Activated B cell treated with CpG ODN at 0.5 μM for 24 hours (primary cell): ENCODE measurements at regions of chr1 and their contacts with region 1.

Region 1: GRCh38 chr1:56709269-56709880 is 64.3 kb downstream of the PRKAA2 start:
- DNase-seq: no peak
- ATAC-seq: no peak
- H3K4me3 Mint-ChIP-seq: no peak overlapping the region
- H3K27ac Mint-ChIP-seq: no peak overlapping the region
- H3K4me1 Mint-ChIP-seq: no peaks in the 10 kb centered on the region
- H3K27me3 Mint-ChIP-seq: peaks cover 25% of the 10 kb centered on the region
- CTCF ChIP-seq: no peak

Region 2: GRCh38 chr1:55337801-55338447 is 1371.5 kb before region 1 on chr1:
- CTCF ChIA-PET with region 1: no interaction called
- POLR2A ChIA-PET with region 1: no interaction called
- intact Hi-C with region 1: loop called (anchors 2 kb)
- DNase-seq: no peak
- ATAC-seq: peak; percentile 66
- H3K4me3 Mint-ChIP-seq: no peak overlapping the region
- H3K27ac Mint-ChIP-seq: peak overlapping the region; percentile 12
- H3K4me1 Mint-ChIP-seq: peaks cover 9% of the 10 kb centered on the region
- H3K27me3 Mint-ChIP-seq: peaks cover 6% of the 10 kb centered on the region
- CTCF ChIP-seq: no peak

Region 3: GRCh38 chr1:55375617-55376258 is 1333.6 kb before region 1 on chr1:
- CTCF ChIA-PET with region 1: interaction called, 5 read pairs
- POLR2A ChIA-PET with region 1: no interaction called
- intact Hi-C with region 1: loop called (anchors 1 kb)
- DNase-seq: no peak
- ATAC-seq: peak; percentile 49
- H3K4me3 Mint-ChIP-seq: no peak overlapping the region
- H3K27ac Mint-ChIP-seq: no peak overlapping the region
- H3K4me1 Mint-ChIP-seq: no peaks in the 10 kb centered on the region
- H3K27me3 Mint-ChIP-seq: peaks cover 1% of the 10 kb centered on the region
- CTCF ChIP-seq: peak; percentile 33

Region 4: DNA sequence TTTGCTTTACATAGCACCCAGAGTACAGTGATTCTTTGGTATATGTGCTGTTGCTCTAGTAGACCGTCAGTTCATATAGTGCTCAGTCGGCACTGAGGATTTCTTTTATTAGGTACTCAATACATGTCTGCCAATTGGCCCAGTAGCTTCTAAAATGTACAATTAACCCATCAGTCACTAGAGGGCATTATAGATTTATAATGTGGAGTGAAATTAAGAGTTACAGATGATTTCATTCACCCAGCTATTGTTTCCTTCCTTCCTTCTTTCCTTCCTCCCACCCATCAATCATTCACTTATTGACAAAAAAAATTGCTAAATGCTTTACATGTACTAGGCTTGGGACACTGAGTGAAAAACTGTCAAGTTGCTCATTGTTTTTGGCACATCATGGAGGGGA is 1230.6 kb before region 1 on chr1:
- CTCF ChIA-PET with region 1: interaction called, 16 read pairs
- POLR2A ChIA-PET with region 1: no interaction called
- intact Hi-C with region 1: loop called (anchors 2 kb)
- DNase-seq: no peak
- ATAC-seq: no peak
- H3K4me3 Mint-ChIP-seq: no peak overlapping the region
- H3K27ac Mint-ChIP-seq: no peak overlapping the region
- H3K4me1 Mint-ChIP-seq: no peaks in the 10 kb centered on the region
- H3K27me3 Mint-ChIP-seq: peaks cover 24% of the 10 kb centered on the region
- CTCF ChIP-seq: no peak

Region 5: GRCh38 chr1:56696663-56697062 is 12.7 kb before region 1 on chr1:
- CTCF ChIA-PET with region 1: interaction called, 13 read pairs
- POLR2A ChIA-PET with region 1: no interaction called
- intact Hi-C with region 1: no loop called
- DNase-seq: no peak
- ATAC-seq: no peak
- H3K4me3 Mint-ChIP-seq: no peak overlapping the region
- H3K27ac Mint-ChIP-seq: no peak overlapping the region
- H3K4me1 Mint-ChIP-seq: no peaks in the 10 kb centered on the region
- H3K27me3 Mint-ChIP-seq: peaks cover 3% of the 10 kb centered on the region
- CTCF ChIP-seq: no peak